MCF 10A (cell line): ENCODE measurements at regions of chr13 and their contacts with region 1.

Region 1: DNA sequence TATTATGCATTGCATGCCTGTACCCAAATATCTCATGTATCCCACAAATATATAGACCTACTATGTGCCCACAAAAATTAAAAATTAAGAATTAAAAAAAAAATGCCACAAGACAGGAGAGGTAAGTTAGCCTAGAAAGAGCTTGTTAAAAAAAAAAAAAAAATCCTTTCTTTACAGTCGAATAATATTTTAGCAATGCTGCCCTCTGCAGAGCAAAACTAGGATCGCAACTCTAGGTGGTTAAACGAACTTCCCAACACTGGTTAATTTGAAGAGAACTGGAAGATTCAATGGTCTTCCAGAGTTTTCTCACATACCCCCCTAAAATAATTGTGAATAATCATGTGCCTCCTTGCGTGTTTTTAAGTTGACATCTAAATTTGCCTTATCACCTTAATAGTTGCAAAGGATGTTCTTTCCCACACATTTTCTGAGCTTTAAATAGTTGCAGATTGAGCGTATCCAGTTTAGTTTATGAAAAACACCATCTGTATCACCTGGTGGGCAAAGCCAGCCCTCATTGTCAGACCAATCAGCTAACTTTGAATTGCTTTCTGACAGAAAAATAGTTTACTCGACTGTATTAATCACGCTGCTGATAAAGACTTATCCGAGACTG is 47.4 kb upstream of the RCBTB2 start:
- DNase-seq: peak; percentile 75
- H3K4me3 Mint-ChIP-seq: no peak overlapping the region
- H3K27ac Mint-ChIP-seq: no peak overlapping the region
- H3K4me1 Mint-ChIP-seq: peaks cover 5% of the 10 kb centered on the region
- H3K27me3 Mint-ChIP-seq: no peaks in the 10 kb centered on the region
- CTCF ChIP-seq: peak; percentile 68

Region 2: DNA sequence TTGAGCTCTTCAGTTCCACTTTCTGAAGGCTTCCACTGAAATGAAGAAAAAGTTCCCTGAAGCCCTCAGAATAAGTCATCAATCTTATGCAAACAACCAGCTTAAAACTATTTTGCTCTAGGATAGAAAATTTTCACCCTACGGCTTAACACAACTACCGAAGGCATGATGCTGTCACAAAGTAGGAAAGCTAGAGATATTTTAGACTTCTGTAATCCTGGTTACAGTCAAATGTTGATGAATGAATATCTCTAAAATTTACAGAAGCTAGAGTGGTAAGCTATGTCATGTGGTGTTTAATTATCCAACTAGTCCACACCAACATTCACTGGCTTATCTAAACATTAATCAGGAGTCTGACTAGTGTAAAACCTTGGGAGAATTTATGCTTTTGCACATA is 777.2 kb before region 1 on chr13:
- CTCF ChIA-PET with region 1: no interaction called
- POLR2A ChIA-PET with region 1: no interaction called
- intact Hi-C with region 1: loop called (anchors 10 kb)
- DNase-seq: no peak
- H3K4me3 Mint-ChIP-seq: no peak overlapping the region
- H3K27ac Mint-ChIP-seq: no peak overlapping the region
- H3K4me1 Mint-ChIP-seq: no peaks in the 10 kb centered on the region
- H3K27me3 Mint-ChIP-seq: no peaks in the 10 kb centered on the region
- CTCF ChIP-seq: no peak

Region 3: DNA sequence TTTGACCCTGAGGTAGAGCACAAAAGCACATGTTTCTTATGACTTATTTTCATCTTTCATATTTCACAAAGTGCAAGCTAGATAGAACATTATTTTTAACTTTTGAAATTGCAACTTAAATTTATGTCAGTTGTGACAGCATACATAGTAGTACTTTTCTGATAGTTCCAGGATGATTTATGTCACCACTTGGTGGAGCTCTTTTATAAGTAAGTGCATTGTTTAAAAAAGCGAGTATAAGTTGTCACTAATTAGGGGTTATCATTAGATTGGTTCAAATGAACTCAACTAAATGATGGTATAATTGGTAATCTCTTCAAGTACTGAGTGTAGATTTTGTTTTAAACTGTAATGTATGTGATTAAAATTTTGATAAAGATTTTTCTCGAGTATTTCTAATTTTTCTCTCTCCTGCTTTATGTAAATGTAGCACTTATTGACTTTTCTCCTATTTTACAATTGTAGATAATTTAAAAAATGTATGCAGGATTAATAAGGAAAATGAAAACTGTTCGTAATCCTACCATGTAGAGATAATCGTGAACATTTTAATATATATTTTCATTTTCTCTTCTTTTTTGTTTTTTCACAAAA is 245.7 kb before region 1 on chr13:
- CTCF ChIA-PET with region 1: interaction called, 100 read pairs
- POLR2A ChIA-PET with region 1: interaction called, 31 read pairs
- intact Hi-C with region 1: loop called (anchors 1 kb)
- DNase-seq: peak; percentile 56
- H3K4me3 Mint-ChIP-seq: no peak overlapping the region
- H3K27ac Mint-ChIP-seq: peak overlapping the region; percentile 63
- H3K4me1 Mint-ChIP-seq: peaks cover 20% of the 10 kb centered on the region
- H3K27me3 Mint-ChIP-seq: no peaks in the 10 kb centered on the region
- CTCF ChIP-seq: peak; percentile 48

Region 4: DNA sequence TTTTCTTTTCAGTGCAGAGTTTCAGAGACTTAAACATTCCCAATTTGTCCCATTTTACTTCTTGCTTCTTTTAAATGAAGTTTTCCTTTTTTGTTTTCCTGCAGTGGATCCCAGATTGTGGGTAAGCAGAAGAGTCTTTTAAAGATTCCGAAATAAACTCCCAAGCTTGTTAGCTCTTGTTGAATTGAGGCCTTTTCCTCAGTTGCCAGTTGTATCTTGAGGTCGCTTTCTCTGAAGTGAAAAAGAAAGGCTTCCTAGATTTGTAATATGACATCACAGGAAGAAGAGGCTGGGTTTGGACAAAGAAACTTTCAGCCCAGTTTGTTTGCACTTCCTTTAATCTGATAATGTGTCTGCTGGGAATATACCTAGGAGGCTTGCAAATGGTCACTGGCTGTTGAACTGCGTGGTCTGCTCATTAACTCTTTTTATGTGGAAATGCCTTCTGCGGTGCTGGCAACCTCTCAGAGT is 167.4 kb before region 1 on chr13 and contains the start of gene LPAR6:
- CTCF ChIA-PET with region 1: interaction called, 5 read pairs
- POLR2A ChIA-PET with region 1: interaction called, 21 read pairs
- intact Hi-C with region 1: no loop called
- DNase-seq: peak; percentile 64
- H3K4me3 Mint-ChIP-seq: peak within 1 kb of the TSS; percentile 96
- H3K27ac Mint-ChIP-seq: peak within 1 kb of the TSS; percentile 97
- H3K4me1 Mint-ChIP-seq: peaks cover 20% of the 10 kb centered on the region
- H3K27me3 Mint-ChIP-seq: no peaks in the 10 kb centered on the region
- CTCF ChIP-seq: no peak
- total RNA-seq, gene LPAR6: 2.2 and 3.1 TPM in 2 replicates

Region 5: GRCh38 chr13:48727241-48728011 is 147.1 kb after region 1 on chr13:
- CTCF ChIA-PET with region 1: no interaction called
- POLR2A ChIA-PET with region 1: no interaction called
- intact Hi-C with region 1: no loop called
- DNase-seq: no peak
- H3K4me3 Mint-ChIP-seq: no peak overlapping the region
- H3K27ac Mint-ChIP-seq: no peak overlapping the region
- H3K4me1 Mint-ChIP-seq: peaks cover 9% of the 10 kb centered on the region
- H3K27me3 Mint-ChIP-seq: no peaks in the 10 kb centered on the region
- CTCF ChIP-seq: no peak

Region 6: GRCh38 chr13:48769107-48769704 is 188.9 kb after region 1 on chr13:
- CTCF ChIA-PET with region 1: interaction called, 13 read pairs
- POLR2A ChIA-PET with region 1: no interaction called
- intact Hi-C with region 1: no loop called
- DNase-seq: peak; percentile 90
- H3K4me3 Mint-ChIP-seq: no peak overlapping the region
- H3K27ac Mint-ChIP-seq: no peak overlapping the region
- H3K4me1 Mint-ChIP-seq: peaks cover 7% of the 10 kb centered on the region
- H3K27me3 Mint-ChIP-seq: no peaks in the 10 kb centered on the region
- CTCF ChIP-seq: peak; percentile 100